ENCODE measurements at regions of chr2 and their contacts with region 1.

Region 1: GRCh38 chr2:229408356-229408755 is 137.3 kb upstream of the PID1 start:
- DNase-seq: peak; percentile 96
- ATAC-seq: peak; percentile 81
- H3K4me3 ChIP-seq: no peak overlapping the region
- H3K27ac ChIP-seq: peak overlapping the region; percentile 99
- H3K4me1 ChIP-seq: peaks cover 46% of the 10 kb centered on the region
- H3K27me3 ChIP-seq: no peaks in the 10 kb centered on the region
- CTCF ChIP-seq: no peak

Region 2: GRCh38 chr2:228545041-228545747 is 863.2 kb before region 1 on chr2:
- CTCF ChIA-PET with region 1: no interaction called
- POLR2A ChIA-PET with region 1: no interaction called
- intact Hi-C with region 1: loop called (anchors 5 kb)
- DNase-seq: peak; percentile 87
- ATAC-seq: peak; percentile 80
- H3K4me3 ChIP-seq: no peak overlapping the region
- H3K27ac ChIP-seq: peak overlapping the region; percentile 57
- H3K4me1 ChIP-seq: peaks cover 49% of the 10 kb centered on the region
- H3K27me3 ChIP-seq: no peaks in the 10 kb centered on the region
- CTCF ChIP-seq: no peak

Region 3: DNA sequence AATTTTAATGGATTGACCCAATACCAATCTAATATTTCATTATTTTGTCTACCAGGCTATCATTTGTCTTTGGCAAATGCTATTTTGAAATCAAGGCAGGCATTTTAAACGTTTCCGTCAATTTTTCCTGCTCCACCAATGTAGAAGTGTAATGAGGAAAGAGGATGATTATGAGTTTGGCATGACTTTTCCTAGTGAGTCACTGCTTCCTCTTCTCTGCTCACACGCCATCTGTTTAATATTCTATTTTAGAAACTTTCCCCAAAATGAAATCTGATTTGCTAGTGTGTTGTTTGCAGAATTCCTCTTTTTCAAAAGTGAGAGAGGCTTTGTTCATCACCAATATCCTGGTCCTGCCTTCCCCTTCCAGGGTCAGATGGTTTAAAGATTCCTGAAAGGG is 94.8 kb before region 1 on chr2:
- CTCF ChIA-PET with region 1: no interaction called
- POLR2A ChIA-PET with region 1: no interaction called
- intact Hi-C with region 1: no loop called
- DNase-seq: peak; percentile 63
- ATAC-seq: peak; percentile 29; the same call in 1 of the 2 replicates
- H3K4me3 ChIP-seq: no peak overlapping the region
- H3K27ac ChIP-seq: peak overlapping the region; percentile 60
- H3K4me1 ChIP-seq: peaks cover 9% of the 10 kb centered on the region; the same call in 1 of the 2 replicates
- H3K27me3 ChIP-seq: no peaks in the 10 kb centered on the region
- CTCF ChIP-seq: no peak

Region 4: GRCh38 chr2:229342376-229342775 is 66.0 kb before region 1 on chr2:
- CTCF ChIA-PET with region 1: no interaction called
- POLR2A ChIA-PET with region 1: no interaction called
- intact Hi-C with region 1: loop called (anchors 1 kb)
- DNase-seq: peak; percentile 65
- ATAC-seq: peak; percentile 53; the same call in 1 of the 2 replicates
- H3K4me3 ChIP-seq: no peak overlapping the region
- H3K27ac ChIP-seq: no peak overlapping the region
- H3K4me1 ChIP-seq: peaks cover 30% of the 10 kb centered on the region
- H3K27me3 ChIP-seq: no peaks in the 10 kb centered on the region
- CTCF ChIP-seq: peak; percentile 82

Region 5: GRCh38 chr2:229363185-229363814 is 45.1 kb before region 1 on chr2:
- CTCF ChIA-PET with region 1: no interaction called
- POLR2A ChIA-PET with region 1: no interaction called
- intact Hi-C with region 1: loop called (anchors 1 kb)
- DNase-seq: peak; percentile 40
- ATAC-seq: peak; percentile 86
- H3K4me3 ChIP-seq: no peak overlapping the region
- H3K27ac ChIP-seq: 0 out of 2 replicates have a peak overlapping the region, but pooled peaks have one; percentile 23
- H3K4me1 ChIP-seq: peaks cover 11% of the 10 kb centered on the region
- H3K27me3 ChIP-seq: no peaks in the 10 kb centered on the region
- CTCF ChIP-seq: no peak

Region 6: DNA sequence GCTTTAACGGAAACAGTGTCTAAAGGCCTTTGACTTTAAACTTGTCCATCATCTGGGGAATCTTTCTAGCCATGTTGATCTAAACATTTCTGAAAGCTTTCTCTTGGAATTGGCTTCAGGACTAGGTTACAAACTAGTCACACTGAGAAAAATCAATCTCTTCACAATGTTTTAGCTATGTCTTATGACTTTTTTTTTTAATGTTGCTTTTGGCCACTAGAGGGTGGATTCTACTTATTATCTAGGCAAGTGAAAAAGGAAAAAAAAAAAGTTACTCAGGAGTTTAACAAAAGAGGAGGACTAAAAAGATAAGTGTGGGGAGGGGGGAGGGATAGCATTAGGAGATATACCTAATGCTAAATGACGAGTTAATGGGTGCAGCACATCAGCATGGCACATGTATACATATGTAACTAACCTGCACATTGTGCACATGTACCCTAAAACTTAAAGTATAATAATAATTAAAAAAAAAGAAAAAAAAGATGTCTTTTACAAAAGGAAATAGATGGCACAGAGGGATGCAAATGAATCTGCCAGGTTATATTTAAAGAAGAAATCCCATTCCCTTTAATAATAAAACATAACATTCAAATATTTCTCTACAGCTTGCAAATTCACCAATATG is 23.1 kb after region 1 on chr2:
- CTCF ChIA-PET with region 1: interaction called, 4 read pairs
- POLR2A ChIA-PET with region 1: no interaction called
- intact Hi-C with region 1: loop called (anchors 2 kb)
- DNase-seq: peak; percentile 78
- ATAC-seq: peak; percentile 40; the same call in 1 of the 2 replicates
- H3K4me3 ChIP-seq: no peak overlapping the region
- H3K27ac ChIP-seq: no peak overlapping the region
- H3K4me1 ChIP-seq: peaks cover 7% of the 10 kb centered on the region; the same call in 1 of the 2 replicates
- H3K27me3 ChIP-seq: no peaks in the 10 kb centered on the region
- CTCF ChIP-seq: peak; percentile 67

Region 7: DNA sequence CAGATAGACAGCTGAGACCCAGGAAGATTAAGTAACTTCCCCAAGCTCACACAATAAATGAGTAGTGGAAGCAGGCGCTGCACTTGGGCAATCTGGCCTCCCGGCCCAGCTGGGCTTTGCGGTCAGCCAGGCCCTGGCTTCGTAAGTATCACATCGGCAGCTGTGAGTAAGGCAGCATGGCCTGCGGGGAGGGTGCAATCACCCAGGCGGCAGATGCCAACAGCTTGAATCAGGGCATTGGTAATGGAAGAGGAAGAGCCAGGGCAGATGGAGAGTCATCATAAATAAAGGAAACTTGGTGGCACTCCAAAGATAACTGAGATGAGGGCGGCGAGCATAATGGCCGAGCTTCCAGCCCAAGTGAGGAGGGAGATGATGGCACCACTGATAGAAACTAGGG is 80.7 kb after region 1 on chr2:
- CTCF ChIA-PET with region 1: no interaction called
- POLR2A ChIA-PET with region 1: no interaction called
- intact Hi-C with region 1: no loop called
- DNase-seq: peak; percentile 95
- ATAC-seq: peak; percentile 94
- H3K4me3 ChIP-seq: peak overlapping the region; percentile 19; the same call in 1 of the 2 replicates
- H3K27ac ChIP-seq: peak overlapping the region; percentile 64
- H3K4me1 ChIP-seq: peaks cover 15% of the 10 kb centered on the region
- H3K27me3 ChIP-seq: no peaks in the 10 kb centered on the region
- CTCF ChIP-seq: no peak

Measured in PC-3 (cell line).